AG04450 (cell line): ENCODE measurements at regions of chr12 and their contacts with region 1.

Region 1: DNA sequence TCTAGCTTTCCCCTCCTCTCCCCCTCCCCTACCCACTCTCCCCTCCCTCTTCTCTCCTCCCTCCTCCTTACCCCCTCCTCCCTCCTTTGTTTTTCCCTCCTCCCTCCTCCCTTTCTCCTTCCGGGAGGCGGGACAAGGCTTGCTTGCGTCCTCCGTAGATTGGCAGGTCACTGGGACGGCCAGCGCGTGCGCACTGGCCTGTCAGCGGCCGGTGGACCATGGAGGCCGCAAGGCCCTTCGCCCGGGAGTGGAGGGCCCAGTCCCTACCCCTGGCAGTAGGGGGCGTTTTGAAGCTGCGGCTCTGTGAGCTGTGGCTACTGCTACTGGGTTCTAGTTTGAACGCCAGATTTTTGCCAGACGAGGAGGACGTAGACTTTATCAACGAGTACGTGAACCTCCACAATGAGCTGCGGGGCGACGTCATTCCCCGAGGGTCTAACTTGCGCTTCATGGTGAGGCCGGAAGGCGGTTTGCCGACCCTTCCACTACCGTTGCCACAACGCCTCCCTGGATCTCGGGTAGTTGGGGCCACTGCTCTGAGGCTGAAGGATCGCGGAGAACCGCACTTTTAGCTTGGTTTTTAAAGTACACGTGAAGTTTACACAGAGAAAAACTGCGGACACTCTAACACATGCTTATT is at the start of gene GLIPR1L2:
- DNase-seq: peak; percentile 92
- H3K4me3 ChIP-seq: peak within 1 kb of the TSS; percentile 62
- H3K27ac ChIP-seq: peak within 1 kb of the TSS; percentile 84
- H3K27me3 ChIP-seq: no peaks in the 10 kb centered on the region
- CTCF ChIP-seq: peak; percentile 89
- polyA plus RNA-seq, gene GLIPR1L2: 0.21 and 0.27 TPM in 2 replicates

Region 2: GRCh38 chr12:75334384-75335030 is 56.5 kb before region 1 on chr12 and contains the start of gene GLIPR1L1:
- CTCF ChIA-PET with region 1: interaction called, 12 read pairs
- POLR2A ChIA-PET with region 1: no interaction called
- DNase-seq: peak; percentile 82
- H3K4me3 ChIP-seq: peak within 1 kb of the TSS; percentile 65
- H3K27ac ChIP-seq: peak within 1 kb of the TSS; percentile 34
- H3K27me3 ChIP-seq: no peaks in the 10 kb centered on the region
- CTCF ChIP-seq: peak; percentile 89
- polyA plus RNA-seq, gene GLIPR1L1: not detected in 2 replicates

Region 3: DNA sequence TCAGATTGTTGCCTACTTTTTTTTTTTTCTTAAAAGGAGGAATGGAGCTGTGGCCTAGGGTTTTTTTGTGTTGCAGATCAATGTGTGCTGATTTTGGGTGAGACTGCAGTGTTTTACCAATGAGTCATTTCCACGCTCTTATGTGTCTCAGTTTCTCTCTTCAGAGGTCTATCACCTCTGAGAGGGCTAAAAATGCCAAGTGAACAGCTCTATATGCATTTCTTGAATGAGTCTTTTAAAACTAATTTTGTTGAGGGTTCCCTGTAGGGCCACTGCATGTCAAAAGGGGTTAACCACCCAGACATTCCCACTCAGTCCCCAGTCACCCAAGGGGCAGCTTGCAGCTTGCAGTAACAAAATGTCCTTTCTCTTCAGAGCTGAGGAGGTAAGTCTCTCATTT is 24.4 kb before region 1 on chr12:
- CTCF ChIA-PET with region 1: interaction called, 10 read pairs
- POLR2A ChIA-PET with region 1: no interaction called
- DNase-seq: no peak
- H3K4me3 ChIP-seq: no peak overlapping the region
- H3K27ac ChIP-seq: no peak overlapping the region
- H3K27me3 ChIP-seq: no peaks in the 10 kb centered on the region
- CTCF ChIP-seq: no peak

Region 4: DNA sequence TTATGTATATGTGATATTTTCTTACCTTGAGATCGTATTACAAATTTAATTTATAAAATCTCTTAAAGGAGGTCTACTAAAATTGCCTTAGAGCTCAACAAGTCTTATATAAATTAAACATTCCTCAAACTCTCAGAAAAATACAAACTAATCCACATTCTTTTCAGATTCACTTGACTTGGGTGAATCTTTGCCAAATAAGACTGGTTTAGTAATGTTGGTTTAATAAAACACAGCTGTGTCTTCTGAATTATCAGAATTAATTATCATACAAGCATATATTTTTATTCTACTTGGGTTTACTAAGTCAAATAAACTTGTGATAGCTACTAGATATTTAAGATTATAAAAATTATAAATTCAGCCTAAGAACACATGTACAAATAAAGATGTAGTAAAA is 13.2 kb after region 1 on chr12:
- CTCF ChIA-PET with region 1: interaction called, 45 read pairs
- POLR2A ChIA-PET with region 1: no interaction called
- DNase-seq: no peak
- H3K4me3 ChIP-seq: no peak overlapping the region
- H3K27ac ChIP-seq: no peak overlapping the region
- H3K27me3 ChIP-seq: no peaks in the 10 kb centered on the region
- CTCF ChIP-seq: no peak

Region 5: DNA sequence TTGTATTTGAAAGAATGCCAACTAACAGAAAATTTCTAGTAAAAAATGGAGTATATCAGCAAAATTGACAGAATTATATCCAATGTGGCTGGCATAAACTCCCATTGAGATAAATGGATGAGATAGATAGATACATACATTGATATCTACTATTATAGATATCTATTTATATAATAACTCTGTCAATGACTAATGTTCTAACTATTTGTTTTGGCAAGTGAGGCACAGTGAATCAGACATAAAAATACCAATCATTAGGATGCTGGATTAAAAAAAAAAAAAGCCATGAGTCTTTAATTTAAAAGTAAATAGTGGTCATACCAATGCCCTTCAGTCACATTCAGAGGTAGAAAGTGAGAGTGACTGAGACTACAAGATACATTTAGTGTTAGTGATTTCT is 55.8 kb after region 1 on chr12:
- CTCF ChIA-PET with region 1: interaction called, 12 read pairs
- POLR2A ChIA-PET with region 1: no interaction called
- DNase-seq: peak; percentile 34
- H3K4me3 ChIP-seq: no peak overlapping the region
- H3K27ac ChIP-seq: no peak overlapping the region
- H3K27me3 ChIP-seq: no peaks in the 10 kb centered on the region
- CTCF ChIP-seq: no peak

Region 6: DNA sequence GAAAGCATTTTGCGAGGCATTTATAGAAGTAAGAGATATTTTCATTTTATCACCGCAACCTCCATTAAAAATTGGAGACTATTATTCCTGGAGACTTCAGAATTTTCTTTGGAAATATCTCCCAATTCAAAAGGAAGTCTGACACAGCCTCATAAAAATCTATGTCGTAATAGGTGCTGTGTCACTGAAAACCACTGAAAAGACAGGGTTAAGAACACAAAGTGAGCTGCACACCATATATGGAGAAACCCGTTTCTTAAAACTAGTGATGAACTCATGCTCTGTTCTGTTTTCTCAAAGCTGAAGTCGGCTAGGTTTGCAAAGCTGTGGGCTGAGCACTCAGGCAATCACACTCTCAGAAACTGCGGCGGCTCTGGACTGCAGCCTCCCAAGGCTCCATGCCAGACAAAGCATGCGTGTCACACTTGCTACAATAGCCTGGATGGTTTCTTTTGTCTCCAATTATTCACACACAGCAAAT is 89.5 kb after region 1 on chr12 and contains the start of gene GLIPR1:
- CTCF ChIA-PET with region 1: interaction called, 33 read pairs
- POLR2A ChIA-PET with region 1: interaction called, 14 read pairs
- DNase-seq: peak; percentile 97
- H3K4me3 ChIP-seq: peak within 1 kb of the TSS; percentile 73
- H3K27ac ChIP-seq: peak within 1 kb of the TSS; percentile 89
- H3K27me3 ChIP-seq: no peaks in the 10 kb centered on the region
- CTCF ChIP-seq: no peak
- polyA plus RNA-seq, gene GLIPR1: 299 and 335 TPM in 2 replicates

Region 7: GRCh38 chr12:75505706-75506312 is 114.8 kb after region 1 on chr12:
- CTCF ChIA-PET with region 1: interaction called, 13 read pairs
- POLR2A ChIA-PET with region 1: interaction called, 3 read pairs
- DNase-seq: no peak
- H3K4me3 ChIP-seq: no peak overlapping the region
- H3K27ac ChIP-seq: no peak overlapping the region
- H3K27me3 ChIP-seq: no peaks in the 10 kb centered on the region
- CTCF ChIP-seq: peak; percentile 74